Right cardiac atrium (tissue), 5 donors: ENCODE measurements at regions of chr11 and their contacts with region 1.

Region 1: GRCh38 chr11:63991558-63991957 is 5.3 kb downstream of the OTUB1 start:
- DNase-seq: no peak
- ATAC-seq: no peak
- H3K4me3 ChIP-seq: no peak overlapping the region
- H3K27ac ChIP-seq: no peak overlapping the region
- H3K4me1 ChIP-seq: peaks cover 4% of the 10 kb centered on the region
- H3K27me3 ChIP-seq: no peaks in the 10 kb centered on the region

Region 2: GRCh38 chr11:63916837-63917691 is 74.5 kb before region 1 on chr11 and contains the start of gene RCOR2:
- intact Hi-C with region 1: loop called in 1 of 4 experiments (anchors 2 kb)
- DNase-seq: peak; percentile 84 to 94 (median 94)
- ATAC-seq: peak; percentile 47 to 56
- H3K4me3 ChIP-seq: peak within 1 kb of the TSS; percentile 59
- H3K27ac ChIP-seq: peak within 1 kb of the TSS; percentile 82
- H3K4me1 ChIP-seq: peaks cover 11% of the 10 kb centered on the region
- H3K27me3 ChIP-seq: no peaks in the 10 kb centered on the region
- total RNA-seq, gene RCOR2: 1.6 to 10.1 (median 8.7) TPM

Region 3: DNA sequence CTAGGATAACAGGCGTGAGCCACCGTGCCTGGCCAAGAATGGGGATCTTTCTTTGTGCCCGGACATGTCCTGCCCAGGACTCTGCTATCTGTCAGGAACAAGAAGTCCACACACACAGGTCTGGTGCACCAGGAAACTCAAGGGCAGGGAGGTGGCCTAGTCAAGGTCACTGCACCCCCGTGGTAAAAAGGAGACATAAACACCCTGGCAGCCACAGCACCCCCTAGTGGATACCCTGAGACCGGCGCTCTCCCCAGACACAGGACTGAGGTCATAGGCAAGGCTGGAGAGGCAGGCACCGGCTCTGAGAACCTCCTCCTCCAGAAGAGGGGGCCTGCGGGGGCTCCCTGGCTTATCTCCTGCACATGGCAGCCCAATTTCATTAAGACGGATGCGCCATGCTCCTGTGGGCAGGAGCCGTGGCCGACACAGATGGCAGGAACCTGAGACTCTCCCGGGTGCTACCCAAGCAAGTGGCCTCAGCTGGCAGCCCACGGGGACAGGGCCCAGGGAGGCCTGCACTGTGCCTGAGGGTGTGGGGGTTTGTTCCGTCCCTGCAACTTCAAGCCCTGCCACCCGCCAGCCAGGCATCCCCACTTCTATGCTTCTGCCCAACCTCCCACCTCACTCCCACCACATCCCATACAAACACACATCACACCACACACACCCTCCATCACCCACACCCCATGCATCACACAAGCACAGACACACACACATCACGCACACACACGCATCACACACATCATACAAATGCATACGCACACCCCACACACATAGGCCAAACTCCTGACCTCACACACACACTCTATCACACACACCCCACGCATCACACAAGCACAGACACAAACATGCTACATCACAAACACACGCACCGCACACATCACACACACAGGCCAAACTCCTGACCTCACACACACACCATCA is 154.7 kb after region 1 on chr11:
- intact Hi-C with region 1: no loop called
- DNase-seq: peak in 2 of 3 donors; percentile 41 to 69
- ATAC-seq: no peak
- H3K4me3 ChIP-seq: no peak overlapping the region
- H3K27ac ChIP-seq: no peak overlapping the region
- H3K4me1 ChIP-seq: no peaks in the 10 kb centered on the region
- H3K27me3 ChIP-seq: no peaks in the 10 kb centered on the region

Region 4: GRCh38 chr11:64263021-64263946 is 271.7 kb after region 1 on chr11:
- intact Hi-C with region 1: no loop called
- DNase-seq: peak in 2 of 3 donors; percentile 56 to 64
- ATAC-seq: no peak
- H3K4me3 ChIP-seq: no peak overlapping the region
- H3K27ac ChIP-seq: no peak overlapping the region
- H3K4me1 ChIP-seq: no peaks in the 10 kb centered on the region
- H3K27me3 ChIP-seq: no peaks in the 10 kb centered on the region